Activated CD8-positive, alpha-beta memory T cell treated with anti-CD3 and anti-CD28 coated beads, Interleukin-2, amount 10 ng/mL, durations not matched to agents 7 days and 5 days (primary cell): ENCODE measurements at regions of chr16 and their contacts with region 1.

Region 1: DNA sequence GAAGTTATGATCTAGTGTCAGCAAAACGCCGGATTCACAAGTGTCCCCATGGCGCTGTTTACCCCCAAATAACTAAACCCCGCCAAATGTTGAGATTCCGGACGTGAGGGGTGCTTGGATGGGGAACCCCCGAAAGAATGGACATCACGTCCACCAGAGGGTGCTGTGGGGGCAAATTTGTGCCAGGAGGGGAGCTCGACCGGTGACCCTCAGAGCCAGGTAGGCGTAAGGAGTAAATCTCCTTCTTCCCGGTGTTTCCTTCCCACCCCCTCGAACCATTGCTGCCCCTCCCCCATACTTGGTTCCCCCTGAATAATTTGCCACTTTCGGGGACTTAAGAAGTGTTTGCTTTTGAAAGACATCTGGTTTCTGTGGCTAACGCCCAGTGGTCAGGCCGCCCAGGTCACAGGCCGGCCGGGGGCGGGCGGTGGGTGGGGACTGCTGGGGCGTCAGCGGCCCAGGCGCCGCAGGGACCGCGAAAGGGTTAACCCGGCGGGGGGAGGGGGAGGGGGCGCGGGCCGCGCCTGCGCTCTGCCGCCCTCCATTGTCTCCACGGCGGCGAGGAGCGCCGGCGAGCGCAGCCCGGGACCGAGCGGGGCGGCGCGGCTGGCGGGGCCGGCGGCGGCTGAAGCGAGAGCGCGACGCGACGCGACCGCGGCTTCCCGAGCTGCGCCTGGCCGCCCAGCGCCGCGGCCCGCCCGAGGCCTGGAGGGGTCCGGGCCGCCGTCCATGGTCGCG is at the start of gene ZNRF1:
- DNase-seq: peak; percentile 91
- ATAC-seq: peak; percentile 86
- H3K4me3 Mint-ChIP-seq: peak within 1 kb of the TSS; percentile 77
- H3K27ac Mint-ChIP-seq: peak within 1 kb of the TSS; percentile 77
- H3K4me1 Mint-ChIP-seq: peaks cover 33% of the 10 kb centered on the region
- H3K27me3 Mint-ChIP-seq: peaks cover 24% of the 10 kb centered on the region
- total RNA-seq, gene ZNRF1: 16.1 to 22.5 TPM

Region 2: DNA sequence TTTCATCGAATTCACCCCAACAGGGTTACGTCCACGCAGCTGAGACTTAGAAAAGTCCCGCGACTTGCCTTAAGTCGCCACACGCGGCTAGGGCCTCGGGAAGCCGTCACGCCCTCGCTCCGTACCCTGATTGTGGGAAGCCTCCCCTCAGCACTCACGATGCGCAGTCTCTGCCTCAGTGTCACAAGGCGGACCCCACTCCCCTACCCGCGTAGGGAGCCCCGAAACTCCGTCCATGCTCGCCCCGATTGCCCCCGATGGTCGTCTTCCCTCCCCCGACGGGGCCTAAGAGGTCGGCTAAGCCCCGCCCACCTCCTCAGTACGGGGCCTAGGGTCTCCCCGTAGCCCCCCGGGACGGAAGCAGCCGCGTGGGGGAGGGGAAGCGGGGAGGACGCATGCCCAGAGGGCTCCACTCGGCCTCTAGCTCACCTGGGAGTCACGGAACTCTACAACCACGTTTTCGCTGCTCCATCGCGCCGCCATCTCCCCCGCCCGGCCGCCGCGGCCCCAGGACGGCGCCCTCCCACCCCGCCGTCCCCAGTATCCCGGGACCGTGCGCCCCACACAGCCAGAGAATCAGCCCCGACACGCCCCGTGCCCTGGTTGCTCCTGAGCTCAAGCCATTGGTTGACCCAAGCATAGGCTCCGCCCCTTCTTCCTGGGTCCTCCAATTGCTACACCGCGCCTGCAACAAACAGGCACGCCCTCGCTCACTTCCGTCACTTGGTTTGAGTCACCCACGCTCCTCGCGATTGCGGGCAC is 13.9 kb before region 1 on chr16 and contains the start of gene WDR59:
- CTCF ChIA-PET with region 1: interaction called, 52 read pairs
- DNase-seq: peak; percentile 100
- ATAC-seq: peak; percentile 100
- H3K4me3 Mint-ChIP-seq: peak within 1 kb of the TSS; percentile 85
- H3K27ac Mint-ChIP-seq: peak within 1 kb of the TSS; percentile 89
- H3K4me1 Mint-ChIP-seq: peaks cover 14% of the 10 kb centered on the region
- H3K27me3 Mint-ChIP-seq: no peaks in the 10 kb centered on the region
- total RNA-seq, gene WDR59: 59.0 to 74.6 TPM

Region 3: DNA sequence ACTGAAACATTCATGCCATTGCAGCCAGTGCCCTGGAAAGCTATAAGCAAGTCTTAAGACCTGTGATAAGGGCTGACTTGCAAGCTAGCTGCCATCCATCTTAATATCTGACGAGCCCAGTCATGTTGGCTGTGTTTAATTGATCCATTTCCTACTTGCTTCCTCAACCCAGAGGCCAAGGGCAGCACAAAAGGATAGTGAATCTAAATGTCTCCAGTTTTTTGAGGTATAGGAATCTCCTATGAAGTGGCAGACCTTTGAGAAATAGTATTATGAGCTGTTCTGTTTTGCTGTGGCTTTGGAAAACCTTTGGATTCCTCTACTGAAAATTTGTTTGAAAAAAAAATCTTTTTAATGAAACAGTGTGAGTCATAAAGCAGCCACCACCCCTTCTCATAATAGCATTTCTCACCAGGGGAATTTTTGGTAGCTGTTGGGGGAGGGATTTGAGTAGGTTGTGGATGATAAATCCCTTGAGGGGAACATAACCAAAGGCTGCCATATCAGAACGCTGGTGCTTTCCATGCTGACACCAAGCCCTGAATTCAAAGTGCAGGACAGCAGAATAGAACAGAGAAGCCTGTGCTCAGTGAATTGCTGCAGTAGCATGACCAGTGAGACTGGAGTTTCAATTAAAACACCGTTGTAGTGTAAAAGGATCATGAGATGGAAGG is 13.1 kb after region 1 on chr16:
- CTCF ChIA-PET with region 1: interaction called, 25 read pairs
- DNase-seq: peak; percentile 55
- ATAC-seq: peak; percentile 66
- H3K4me3 Mint-ChIP-seq: peak overlapping the region; percentile 62
- H3K27ac Mint-ChIP-seq: peak overlapping the region; percentile 74
- H3K4me1 Mint-ChIP-seq: peaks cover 39% of the 10 kb centered on the region
- H3K27me3 Mint-ChIP-seq: no peaks in the 10 kb centered on the region

Region 4: GRCh38 chr16:75099756-75100602 is 101.3 kb after region 1 on chr16:
- CTCF ChIA-PET with region 1: interaction called, 30 read pairs
- DNase-seq: peak; percentile 84
- ATAC-seq: peak; percentile 73
- H3K4me3 Mint-ChIP-seq: peak overlapping the region; percentile 19
- H3K27ac Mint-ChIP-seq: peak overlapping the region; percentile 93
- H3K4me1 Mint-ChIP-seq: peaks cover 56% of the 10 kb centered on the region
- H3K27me3 Mint-ChIP-seq: no peaks in the 10 kb centered on the region

Region 5: GRCh38 chr16:75105306-75106061 is 106.8 kb after region 1 on chr16:
- CTCF ChIA-PET with region 1: interaction called, 150 read pairs
- DNase-seq: no peak
- ATAC-seq: no peak
- H3K4me3 Mint-ChIP-seq: no peak overlapping the region
- H3K27ac Mint-ChIP-seq: peak overlapping the region; percentile 27
- H3K4me1 Mint-ChIP-seq: peaks cover 69% of the 10 kb centered on the region
- H3K27me3 Mint-ChIP-seq: no peaks in the 10 kb centered on the region